Activated T-helper 1 cell treated with anti-CD3 and anti-CD28 coated beads, Interleukin-12 subunit alpha, Interleukin-12 subunit beta, Interleukin-2, Interleukin-4 antibody, amounts not matched to agents 30 ng/mL and 10 ng/mL and 1 ng/mL, durations not matched to agents 14 hours and 24 hours and 36 hours (primary cell): ENCODE measurements at regions of chr22 and their contacts with region 1.

Region 1: GRCh38 chr22:39306581-39307361 is 12.7 kb downstream of the RPL3 start:
- DNase-seq: peak; percentile 31
- H3K4me3 Mint-ChIP-seq: no peak overlapping the region
- H3K27ac Mint-ChIP-seq: no peak overlapping the region
- H3K4me1 Mint-ChIP-seq: peaks cover 13% of the 10 kb centered on the region
- H3K27me3 Mint-ChIP-seq: no peaks in the 10 kb centered on the region

Region 2: GRCh38 chr22:39170825-39171622 is 135.7 kb before region 1 on chr22:
- intact Hi-C with region 1: loop called (anchors 1 kb)
- DNase-seq: peak; percentile 79
- H3K4me3 Mint-ChIP-seq: peak overlapping the region; percentile 75
- H3K27ac Mint-ChIP-seq: peak overlapping the region; percentile 63
- H3K4me1 Mint-ChIP-seq: peaks cover 40% of the 10 kb centered on the region
- H3K27me3 Mint-ChIP-seq: peaks cover 5% of the 10 kb centered on the region

Region 3: GRCh38 chr22:39253435-39254070 is 53.2 kb before region 1 on chr22:
- intact Hi-C with region 1: no loop called
- DNase-seq: peak; percentile 41
- H3K4me3 Mint-ChIP-seq: no peak overlapping the region
- H3K27ac Mint-ChIP-seq: no peak overlapping the region
- H3K4me1 Mint-ChIP-seq: peaks cover 30% of the 10 kb centered on the region
- H3K27me3 Mint-ChIP-seq: peaks cover 6% of the 10 kb centered on the region